ENCODE measurements at regions of chr16 and their contacts with region 1.

Region 1: DNA sequence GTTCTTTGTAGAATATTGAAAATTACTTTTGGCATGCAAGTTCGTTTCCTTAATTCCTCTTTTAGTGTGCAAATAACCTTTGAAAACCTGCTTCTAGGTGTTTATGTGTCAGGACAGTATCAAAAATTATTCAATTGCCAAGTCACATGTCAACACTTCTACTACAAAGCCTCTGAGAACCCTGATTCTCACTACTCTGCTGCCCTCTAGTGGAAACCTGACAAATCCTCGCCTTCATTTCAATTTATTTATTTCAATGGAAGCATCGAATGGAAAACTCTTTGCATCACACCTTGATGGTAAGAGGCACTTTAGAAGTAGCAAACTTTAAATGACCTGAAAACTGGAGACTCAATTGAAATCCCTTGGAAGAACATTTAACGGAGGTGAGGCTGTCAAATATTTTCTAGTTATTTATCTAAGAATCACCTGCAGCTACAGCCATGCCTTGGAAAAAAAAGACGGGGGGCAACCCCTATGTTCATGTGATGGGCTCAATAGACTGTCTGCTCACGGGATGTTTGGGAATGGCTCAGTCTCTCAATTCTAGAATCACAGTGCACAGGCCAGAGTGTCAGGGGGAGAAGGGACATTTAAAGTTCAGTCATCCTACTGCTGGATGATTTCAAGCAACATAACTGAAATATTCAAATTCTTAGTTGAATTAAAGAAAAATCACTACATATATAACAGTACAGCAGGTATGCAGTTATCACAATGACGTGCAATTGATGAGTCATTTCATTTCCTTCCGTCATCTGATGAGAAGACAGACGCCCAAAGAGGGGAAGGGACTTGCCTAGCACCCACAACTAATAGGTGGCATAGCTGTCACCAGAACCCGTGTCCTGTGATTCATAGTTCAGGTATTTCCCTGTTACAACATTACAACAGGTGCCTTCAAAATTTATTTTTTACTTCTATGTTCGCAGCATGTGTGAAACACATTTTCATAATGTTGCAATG is 563.9 kb downstream of the TOX3 start:
- DNase-seq: peak; percentile 76
- H3K4me3 Mint-ChIP-seq: no peak overlapping the region
- H3K27ac Mint-ChIP-seq: no peak overlapping the region
- H3K4me1 Mint-ChIP-seq: peaks cover 6% of the 10 kb centered on the region
- H3K27me3 Mint-ChIP-seq: no peaks in the 10 kb centered on the region
- CTCF ChIP-seq: peak; percentile 60

Region 2: DNA sequence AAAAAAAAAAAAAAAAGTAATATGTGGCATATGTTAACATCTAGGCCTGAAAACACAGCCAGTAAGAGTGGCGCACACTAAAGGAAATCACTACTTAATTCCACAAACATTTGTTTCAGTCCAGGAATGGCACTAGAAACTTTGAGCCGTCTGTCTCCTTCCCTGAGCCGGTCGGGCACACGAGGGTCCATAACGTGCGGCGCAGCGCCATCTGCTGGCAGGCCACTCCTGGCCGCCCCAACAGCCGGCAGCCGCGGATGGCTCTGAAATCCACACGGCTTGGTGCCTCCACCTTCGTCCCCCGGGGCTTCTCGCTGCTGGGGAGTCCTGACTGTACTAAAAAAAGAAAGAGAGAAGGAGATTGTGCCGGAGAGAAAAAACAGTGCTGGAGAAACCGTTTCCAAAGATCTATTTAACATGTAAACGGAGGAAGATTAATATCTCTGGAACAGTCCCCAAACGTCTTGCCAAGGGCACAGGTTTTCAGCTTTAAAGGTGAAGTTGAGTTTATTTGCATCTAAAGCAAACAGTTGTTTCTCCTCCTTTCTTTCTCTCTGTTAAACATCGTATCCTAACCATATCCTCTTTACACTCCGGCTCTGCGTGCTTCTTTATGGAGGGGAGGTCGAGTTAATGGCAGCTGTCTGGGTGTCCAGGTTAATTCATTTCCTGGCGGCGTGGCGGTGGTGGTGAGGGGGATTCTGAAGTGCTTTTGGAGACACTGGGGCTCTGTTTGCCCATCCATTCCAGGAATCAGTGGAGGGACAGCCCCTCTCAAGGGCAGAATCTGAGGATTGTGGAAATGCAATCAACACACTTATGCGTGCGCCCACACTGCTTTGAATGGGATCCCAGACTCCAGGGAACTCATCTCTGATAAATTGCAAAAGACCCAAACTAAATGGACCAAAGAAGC is 220.7 kb before region 1 on chr16:
- CTCF ChIA-PET with region 1: interaction called, 4 read pairs
- POLR2A ChIA-PET with region 1: no interaction called
- intact Hi-C with region 1: loop called (anchors 1 kb)
- DNase-seq: peak; percentile 76
- H3K4me3 Mint-ChIP-seq: no peak overlapping the region
- H3K27ac Mint-ChIP-seq: no peak overlapping the region
- H3K4me1 Mint-ChIP-seq: no peaks in the 10 kb centered on the region
- H3K27me3 Mint-ChIP-seq: no peaks in the 10 kb centered on the region
- CTCF ChIP-seq: peak; percentile 90

Region 3: DNA sequence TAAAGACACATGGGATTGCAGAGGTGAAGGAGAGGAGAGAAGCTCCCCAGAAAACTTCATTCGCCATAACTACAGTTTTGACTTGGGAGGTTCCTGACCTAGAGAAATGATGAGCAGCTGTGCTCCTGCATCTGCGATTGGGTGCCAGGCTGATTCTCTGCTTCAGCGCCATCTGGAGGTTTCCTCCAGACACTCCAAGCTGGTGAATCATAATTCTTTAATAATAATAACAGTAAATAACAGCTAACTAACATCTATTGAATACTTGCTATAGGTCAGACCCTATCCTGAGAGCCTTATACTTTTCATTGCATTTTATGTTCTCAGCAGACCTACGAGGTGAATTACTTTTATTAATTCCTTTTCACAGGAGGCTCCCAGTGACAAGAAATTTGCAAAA is 11.8 kb before region 1 on chr16:
- CTCF ChIA-PET with region 1: interaction called, 24 read pairs
- POLR2A ChIA-PET with region 1: no interaction called
- intact Hi-C with region 1: no loop called
- DNase-seq: peak; percentile 54
- H3K4me3 Mint-ChIP-seq: no peak overlapping the region
- H3K27ac Mint-ChIP-seq: no peak overlapping the region
- H3K4me1 Mint-ChIP-seq: peaks cover 6% of the 10 kb centered on the region
- H3K27me3 Mint-ChIP-seq: peaks cover 4% of the 10 kb centered on the region
- CTCF ChIP-seq: peak; percentile 59

Region 4: DNA sequence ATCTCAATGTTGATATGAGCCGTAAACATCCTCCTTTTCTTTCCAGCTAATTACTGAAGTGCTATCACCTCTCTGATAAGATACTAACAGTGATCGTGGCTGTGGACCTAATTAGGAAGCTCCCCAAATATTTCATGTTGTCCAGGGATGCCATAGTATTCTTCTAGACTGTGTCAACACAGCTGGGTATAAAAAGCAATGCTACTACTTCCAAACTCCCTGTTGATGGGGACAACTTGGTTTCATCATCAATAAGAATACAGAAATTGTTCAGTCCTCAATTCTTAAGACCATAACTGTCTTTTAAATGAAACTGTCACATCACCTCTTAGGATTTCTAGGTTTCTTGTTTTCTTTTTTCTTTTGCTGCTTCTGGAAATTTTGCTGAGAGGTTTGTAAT is 33.4 kb after region 1 on chr16:
- CTCF ChIA-PET with region 1: no interaction called
- POLR2A ChIA-PET with region 1: no interaction called
- intact Hi-C with region 1: no loop called
- DNase-seq: no peak
- H3K4me3 Mint-ChIP-seq: no peak overlapping the region
- H3K27ac Mint-ChIP-seq: no peak overlapping the region
- H3K4me1 Mint-ChIP-seq: no peaks in the 10 kb centered on the region
- H3K27me3 Mint-ChIP-seq: peaks cover 30% of the 10 kb centered on the region
- CTCF ChIP-seq: no peak